GM12878 (cell line): ENCODE measurements at regions of chr2 and their contacts with region 1.

Region 1: GRCh38 chr2:64330281-64331113 is 123.5 kb upstream of the LGALSL start:
- DNase-seq: no peak
- ATAC-seq: peak; percentile 22
- H3K4me3 ChIP-seq: no peak overlapping the region
- H3K27ac ChIP-seq: no peak overlapping the region
- H3K4me1 ChIP-seq: peaks cover 41% of the 10 kb centered on the region
- H3K27me3 ChIP-seq: no peaks in the 10 kb centered on the region
- CTCF ChIP-seq: peak; percentile 82 to 92 (median 91)
- EP300 ChIP-seq: no peak
- POLR2A ChIP-seq: no peak
- RAD21 ChIP-seq: peak; percentile 97

Region 2: DNA sequence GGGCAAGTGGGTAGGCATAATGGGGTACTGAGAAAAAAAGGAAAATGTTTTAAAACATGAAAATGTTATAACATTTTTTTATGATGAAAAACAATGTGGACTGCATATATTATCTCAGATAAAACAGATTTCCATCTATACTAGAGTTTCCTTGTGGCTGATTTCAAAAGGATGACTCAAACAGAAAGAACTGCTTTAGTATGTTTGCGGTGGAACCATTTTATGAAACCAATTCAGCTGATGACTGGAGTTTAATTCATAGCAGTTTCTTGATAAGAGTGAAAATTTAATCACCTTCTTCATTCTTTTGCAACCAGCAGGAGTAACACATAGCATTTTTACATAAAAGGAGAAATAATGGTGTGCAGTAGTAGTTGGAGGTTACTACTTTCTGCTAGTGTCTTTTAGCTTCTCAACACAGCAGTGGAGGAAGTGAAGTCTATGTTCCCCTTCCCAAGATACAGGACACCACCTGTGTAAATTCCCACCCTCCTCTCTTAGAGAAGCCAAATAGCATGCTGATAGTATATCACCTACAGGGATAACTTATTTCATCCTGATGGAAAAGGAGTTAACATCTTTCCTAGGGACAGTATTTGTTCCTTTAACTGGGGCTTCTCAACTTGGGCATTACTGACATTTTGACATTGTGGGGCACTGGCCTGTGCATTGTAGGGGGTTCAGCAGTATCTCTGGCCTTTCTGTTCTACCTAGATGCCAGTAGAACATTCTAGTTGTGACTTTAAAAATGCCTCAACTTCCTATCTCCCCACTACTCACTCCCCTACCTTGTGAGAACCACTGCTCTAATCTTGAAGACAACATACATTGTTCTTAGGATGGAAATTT is 216.2 kb before region 1 on chr2:
- CTCF ChIA-PET with region 1: interaction called, 15 read pairs
- POLR2A ChIA-PET with region 1: no interaction called
- RAD21 ChIA-PET with region 1: interaction called, 101 read pairs
- SMC1A ChIA-PET with region 1: interaction called, 104 read pairs
- in situ Hi-C with region 1: no loop called
- intact Hi-C with region 1: no loop called
- DNase-seq: peak; percentile 56
- ATAC-seq: peak; percentile 65
- H3K4me3 ChIP-seq: peak overlapping the region; percentile 28; the same call in 1 of the 2 replicates
- H3K27ac ChIP-seq: peak overlapping the region; percentile 72
- H3K4me1 ChIP-seq: peaks cover 50% of the 10 kb centered on the region
- H3K27me3 ChIP-seq: no peaks in the 10 kb centered on the region
- CTCF ChIP-seq: no peak
- EP300 ChIP-seq: peak; percentile 59 to 82; a peak in 3 of 4 replicates
- POLR2A ChIP-seq: no peak
- RAD21 ChIP-seq: no peak

Region 3: GRCh38 chr2:64203858-64204632 is 126.5 kb before region 1 on chr2:
- CTCF ChIA-PET with region 1: interaction called, 10 read pairs
- POLR2A ChIA-PET with region 1: interaction called, 13 read pairs
- RAD21 ChIA-PET with region 1: interaction called, 93 read pairs
- SMC1A ChIA-PET with region 1: interaction called, 52 read pairs
- in situ Hi-C with region 1: no loop called
- intact Hi-C with region 1: loop called (anchors 2 kb)
- DNase-seq: peak; percentile 88
- ATAC-seq: peak; percentile 76
- H3K4me3 ChIP-seq: peak overlapping the region; percentile 9; the same call in 1 of the 2 replicates
- H3K27ac ChIP-seq: peak overlapping the region; percentile 75
- H3K4me1 ChIP-seq: peaks cover 50% of the 10 kb centered on the region
- H3K27me3 ChIP-seq: no peaks in the 10 kb centered on the region
- CTCF ChIP-seq: no peak
- EP300 ChIP-seq: peak; percentile 38 to 80; a peak in 2 of 4 replicates
- POLR2A ChIP-seq: peak; percentile 68
- RAD21 ChIP-seq: no peak

Region 4: DNA sequence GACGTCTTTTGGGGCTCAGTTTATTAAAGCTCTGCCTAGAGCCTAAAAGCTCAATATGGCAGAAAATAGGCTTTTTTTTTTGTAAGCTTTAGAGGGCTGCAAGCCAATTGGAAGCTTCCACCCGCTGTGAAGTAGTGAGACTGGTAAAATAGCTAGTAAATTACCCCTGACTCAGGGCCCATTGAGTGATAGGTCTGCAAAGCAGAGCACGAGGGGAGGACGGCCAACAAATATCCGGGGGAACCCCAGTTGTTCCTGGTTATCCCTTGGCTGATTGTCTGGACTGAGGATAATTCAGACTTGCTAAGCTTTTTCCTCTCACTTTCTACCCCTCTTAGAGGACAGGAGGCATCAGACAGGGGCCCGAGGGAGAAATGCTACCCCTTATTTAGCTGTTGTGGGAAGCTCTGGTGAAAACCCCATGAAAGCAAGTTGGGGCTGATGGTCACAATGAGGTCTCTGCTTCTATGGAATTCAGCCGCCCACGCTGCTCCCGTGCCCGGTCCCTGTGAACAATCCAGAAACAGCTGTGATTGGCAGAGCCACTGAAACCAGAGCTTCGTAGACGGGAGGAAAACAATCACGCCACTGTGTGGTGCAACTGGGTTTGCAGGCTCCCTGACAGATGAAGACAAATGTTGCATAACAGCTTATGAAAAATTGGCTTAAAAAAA is 18.4 kb before region 1 on chr2:
- CTCF ChIA-PET with region 1: interaction called, 97 read pairs
- POLR2A ChIA-PET with region 1: interaction called, 14 read pairs
- RAD21 ChIA-PET with region 1: interaction called, 83 read pairs
- SMC1A ChIA-PET with region 1: interaction called, 71 read pairs
- in situ Hi-C with region 1: no loop called
- intact Hi-C with region 1: no loop called
- DNase-seq: no peak
- ATAC-seq: peak; percentile 80
- H3K4me3 ChIP-seq: no peak overlapping the region
- H3K27ac ChIP-seq: no peak overlapping the region
- H3K4me1 ChIP-seq: no peaks in the 10 kb centered on the region
- H3K27me3 ChIP-seq: no peaks in the 10 kb centered on the region
- CTCF ChIP-seq: peak in 2 of 3 experiments; percentile 38 to 55; a peak in 3 of 6 replicates
- EP300 ChIP-seq: no peak
- POLR2A ChIP-seq: no peak
- RAD21 ChIP-seq: no peak

Region 5: DNA sequence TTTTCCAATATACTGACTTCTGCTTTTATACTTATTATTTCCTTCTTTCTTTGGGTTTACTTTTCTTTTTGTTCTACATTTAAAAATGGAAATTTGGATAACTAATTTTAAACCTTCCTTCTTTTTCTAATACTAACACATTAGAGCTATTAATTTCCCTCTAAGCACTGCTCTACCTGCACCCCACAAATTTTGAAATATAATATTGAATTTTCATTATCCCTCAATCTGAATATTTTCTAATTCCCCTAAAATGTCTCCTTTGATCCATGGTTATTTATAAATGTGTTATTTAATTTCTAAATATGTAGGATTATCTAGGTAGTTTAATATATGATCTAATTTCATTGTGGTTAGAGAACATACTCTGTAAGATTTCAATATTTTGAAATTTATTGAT is 60.1 kb after region 1 on chr2:
- CTCF ChIA-PET with region 1: no interaction called
- POLR2A ChIA-PET with region 1: no interaction called
- RAD21 ChIA-PET with region 1: no interaction called
- SMC1A ChIA-PET with region 1: no interaction called
- in situ Hi-C with region 1: no loop called
- intact Hi-C with region 1: no loop called
- DNase-seq: no peak
- ATAC-seq: no peak
- H3K4me3 ChIP-seq: no peak overlapping the region
- H3K27ac ChIP-seq: no peak overlapping the region
- H3K4me1 ChIP-seq: no peaks in the 10 kb centered on the region
- H3K27me3 ChIP-seq: no peaks in the 10 kb centered on the region
- CTCF ChIP-seq: no peak
- EP300 ChIP-seq: no peak
- POLR2A ChIP-seq: no peak
- RAD21 ChIP-seq: no peak

Region 6: GRCh38 chr2:64488050-64488974 is 157.8 kb after region 1 on chr2:
- CTCF ChIA-PET with region 1: interaction called, 467 read pairs
- POLR2A ChIA-PET with region 1: interaction called, 8 read pairs
- RAD21 ChIA-PET with region 1: interaction called, 240 read pairs
- SMC1A ChIA-PET with region 1: interaction called, 300 read pairs
- in situ Hi-C with region 1: loop called (anchors 5 kb)
- intact Hi-C with region 1: loop called (anchors 1 kb)
- DNase-seq: peak; percentile 12
- ATAC-seq: peak; percentile 94
- H3K4me3 ChIP-seq: no peak overlapping the region
- H3K27ac ChIP-seq: no peak overlapping the region
- H3K4me1 ChIP-seq: peaks cover 5% of the 10 kb centered on the region
- H3K27me3 ChIP-seq: no peaks in the 10 kb centered on the region
- CTCF ChIP-seq: peak; percentile 84 to 92 (median 91)
- EP300 ChIP-seq: no peak
- POLR2A ChIP-seq: no peak
- RAD21 ChIP-seq: peak; percentile 90

Region 7: DNA sequence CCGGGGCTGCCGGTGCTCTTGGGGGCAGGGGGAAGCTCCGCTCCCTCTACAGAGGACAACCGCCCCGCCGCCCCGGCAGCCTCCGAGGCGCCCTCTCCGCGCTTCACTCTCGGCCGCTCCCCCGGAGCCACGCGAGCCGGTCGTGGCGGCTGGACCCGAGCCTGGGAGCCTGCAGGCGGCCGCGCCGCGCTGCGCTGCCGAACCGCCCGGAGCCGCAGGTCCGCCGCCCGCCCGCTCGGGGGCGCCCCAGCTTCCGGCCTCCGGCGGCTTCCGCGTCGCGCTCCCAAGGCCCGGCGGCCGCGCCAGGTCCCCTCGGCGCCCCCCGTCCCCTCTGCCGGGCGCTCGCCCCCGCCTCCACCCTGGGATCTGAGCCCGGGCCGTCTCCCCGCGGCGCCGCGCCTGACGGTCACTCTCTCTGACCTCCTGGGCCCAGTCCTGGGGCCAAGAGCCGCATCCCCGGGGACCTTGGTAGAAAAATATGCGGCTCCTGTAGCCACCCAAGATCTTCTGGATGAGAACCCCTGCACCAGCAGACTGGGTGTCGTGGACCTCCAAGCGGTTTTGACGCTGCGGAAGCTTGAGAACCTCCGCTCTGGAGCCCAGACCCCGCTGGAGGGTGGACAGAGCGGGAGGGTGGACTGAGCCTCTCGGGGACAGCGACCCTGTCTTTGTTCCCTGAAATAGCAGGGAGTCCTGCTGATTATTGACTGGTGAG is 278.9 kb after region 1 on chr2:
- CTCF ChIA-PET with region 1: interaction called, 11 read pairs
- POLR2A ChIA-PET with region 1: interaction called, 3 read pairs
- RAD21 ChIA-PET with region 1: interaction called, 10 read pairs
- SMC1A ChIA-PET with region 1: interaction called, 6 read pairs
- in situ Hi-C with region 1: no loop called
- intact Hi-C with region 1: no loop called
- DNase-seq: no peak
- ATAC-seq: peak; percentile 62
- H3K4me3 ChIP-seq: peak overlapping the region; percentile 68
- H3K27ac ChIP-seq: peak overlapping the region; percentile 14; the same call in 1 of the 2 replicates
- H3K4me1 ChIP-seq: peaks cover 38% of the 10 kb centered on the region
- H3K27me3 ChIP-seq: no peaks in the 10 kb centered on the region
- CTCF ChIP-seq: peak; percentile 30 to 63 (median 33); a peak in 4 of 6 replicates
- EP300 ChIP-seq: no peak
- POLR2A ChIP-seq: peak; percentile 70
- RAD21 ChIP-seq: peak; percentile 42

Region 8: GRCh38 chr2:65031341-65032018 is 701.0 kb after region 1 on chr2:
- CTCF ChIA-PET with region 1: interaction called, 3 read pairs
- POLR2A ChIA-PET with region 1: no interaction called
- RAD21 ChIA-PET with region 1: interaction called, 6 read pairs
- SMC1A ChIA-PET with region 1: interaction called, 4 read pairs
- in situ Hi-C with region 1: loop called (anchors 5 kb)
- intact Hi-C with region 1: no loop called
- DNase-seq: no peak
- ATAC-seq: peak; percentile 41
- H3K4me3 ChIP-seq: peak overlapping the region; percentile 46
- H3K27ac ChIP-seq: peak overlapping the region; percentile 73
- H3K4me1 ChIP-seq: peaks cover 51% of the 10 kb centered on the region
- H3K27me3 ChIP-seq: no peaks in the 10 kb centered on the region
- CTCF ChIP-seq: no peak
- EP300 ChIP-seq: no peak
- POLR2A ChIP-seq: no peak
- RAD21 ChIP-seq: no peak